PC-9 (cell line): ENCODE measurements at regions of chr4 and their contacts with region 1.

Region 1: DNA sequence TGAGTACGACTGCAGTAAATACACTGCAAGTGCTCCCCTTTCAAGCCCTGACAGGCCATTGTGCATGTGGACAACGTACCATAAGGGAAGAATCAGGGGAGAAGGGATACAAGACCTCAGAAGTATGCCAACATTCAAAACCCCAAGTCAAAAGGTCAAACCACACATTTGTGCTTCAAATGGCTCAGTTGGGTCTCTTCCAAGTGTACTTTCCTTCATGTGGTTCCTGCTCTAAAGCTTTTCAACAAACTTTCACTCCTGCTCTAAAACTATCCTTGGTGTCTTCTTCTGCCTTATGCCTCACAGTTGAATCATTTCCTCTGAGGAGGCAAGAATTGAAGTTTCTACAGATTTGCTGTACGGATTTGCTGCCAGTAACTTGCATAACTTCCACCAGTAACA is 305.7 kb upstream of the SLIT2 start:
- DNase-seq: peak in 1 of 2 experiments; percentile 41
- H3K4me3 ChIP-seq: no peak overlapping the region
- H3K27ac ChIP-seq: no peak overlapping the region
- H3K4me1 ChIP-seq: no peaks in the 10 kb centered on the region
- H3K27me3 ChIP-seq: no peaks in the 10 kb centered on the region
- CTCF ChIP-seq: no peak

Region 2: GRCh38 chr4:19842471-19842870 is 103.5 kb before region 1 on chr4:
- CTCF ChIA-PET with region 1: no interaction called
- POLR2A ChIA-PET with region 1: no interaction called
- intact Hi-C with region 1: no loop called
- DNase-seq: no peak
- H3K4me3 ChIP-seq: no peak overlapping the region
- H3K27ac ChIP-seq: no peak overlapping the region
- H3K4me1 ChIP-seq: no peaks in the 10 kb centered on the region
- H3K27me3 ChIP-seq: no peaks in the 10 kb centered on the region
- CTCF ChIP-seq: no peak

Region 3: DNA sequence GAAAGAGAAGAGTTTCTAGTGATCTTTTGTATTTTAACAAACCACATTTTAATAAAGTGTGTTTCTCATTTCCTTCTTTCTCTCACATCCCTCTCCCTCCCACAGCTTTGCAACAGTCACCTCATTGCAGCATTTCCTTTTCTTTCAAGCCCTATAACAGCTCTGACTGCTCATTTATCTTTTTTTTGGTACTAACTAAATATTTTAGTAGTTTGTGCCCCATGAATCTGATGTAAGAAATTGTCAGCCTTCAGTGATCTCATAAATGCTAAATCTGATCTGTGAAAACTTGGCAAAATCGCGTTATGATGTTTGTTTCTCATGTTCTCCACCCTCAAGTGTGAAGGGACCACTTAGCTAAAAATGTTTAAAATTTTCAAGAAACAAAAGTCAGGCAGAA is 47.3 kb after region 1 on chr4:
- CTCF ChIA-PET with region 1: no interaction called
- POLR2A ChIA-PET with region 1: no interaction called
- intact Hi-C with region 1: no loop called
- DNase-seq: no peak
- H3K4me3 ChIP-seq: no peak overlapping the region
- H3K27ac ChIP-seq: no peak overlapping the region
- H3K4me1 ChIP-seq: no peaks in the 10 kb centered on the region
- H3K27me3 ChIP-seq: no peaks in the 10 kb centered on the region
- CTCF ChIP-seq: no peak

Region 4: GRCh38 chr4:20028694-20029093 is 82.7 kb after region 1 on chr4:
- CTCF ChIA-PET with region 1: no interaction called
- POLR2A ChIA-PET with region 1: no interaction called
- intact Hi-C with region 1: loop called (anchors 5 kb)
- DNase-seq: peak in 1 of 2 experiments; percentile 36
- H3K4me3 ChIP-seq: no peak overlapping the region
- H3K27ac ChIP-seq: no peak overlapping the region
- H3K4me1 ChIP-seq: no peaks in the 10 kb centered on the region
- H3K27me3 ChIP-seq: no peaks in the 10 kb centered on the region
- CTCF ChIP-seq: no peak

Region 5: DNA sequence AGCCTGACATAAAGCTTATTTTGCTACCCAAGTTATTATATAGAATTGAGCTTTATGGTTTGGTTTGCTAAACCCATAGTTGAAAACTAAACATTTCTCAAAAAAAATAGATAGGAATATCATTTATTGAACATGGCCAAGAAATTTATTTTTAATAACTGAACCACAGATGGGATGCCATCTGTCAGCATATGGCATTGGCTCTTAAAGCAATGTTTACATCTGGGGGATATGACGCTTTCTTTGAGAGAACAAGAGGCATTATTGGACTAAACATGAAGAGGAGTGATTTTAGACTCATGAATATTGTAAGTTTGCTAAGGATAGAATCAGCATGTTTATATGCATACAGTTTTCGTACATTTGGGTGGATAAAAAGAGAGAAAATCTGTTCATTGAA is 173.2 kb after region 1 on chr4:
- CTCF ChIA-PET with region 1: no interaction called
- POLR2A ChIA-PET with region 1: no interaction called
- intact Hi-C with region 1: no loop called
- DNase-seq: no peak
- H3K4me3 ChIP-seq: no peak overlapping the region
- H3K27ac ChIP-seq: no peak overlapping the region
- H3K4me1 ChIP-seq: no peaks in the 10 kb centered on the region
- H3K27me3 ChIP-seq: no peaks in the 10 kb centered on the region
- CTCF ChIP-seq: no peak